ENCODE measurements at regions of chr1 and their contacts with region 1.

Region 1: GRCh38 chr1:119008483-119009311 is 20.6 kb upstream of the TBX15 start:
- DNase-seq: peak; percentile 58
- ATAC-seq: no peak
- H3K4me3 ChIP-seq: peak overlapping the region in 3 of 5 experiments; percentile 1 to 3 (median 1)
- H3K4me3 Mint-ChIP-seq: peak overlapping the region; percentile 85
- H3K27ac ChIP-seq: no peak overlapping the region
- H3K27ac Mint-ChIP-seq: no peak overlapping the region
- H3K4me1 ChIP-seq: peaks cover 18 to 22% of the 10 kb centered on the region in 2 donors
- H3K4me1 Mint-ChIP-seq: peaks cover 17% of the 10 kb centered on the region
- H3K27me3 ChIP-seq: peaks cover 3 to 59% (median 52%) of the 10 kb centered on the region in 4 experiments
- H3K27me3 Mint-ChIP-seq: peaks cover 66% of the 10 kb centered on the region
- CTCF ChIP-seq: peak; percentile 69

Region 2: DNA sequence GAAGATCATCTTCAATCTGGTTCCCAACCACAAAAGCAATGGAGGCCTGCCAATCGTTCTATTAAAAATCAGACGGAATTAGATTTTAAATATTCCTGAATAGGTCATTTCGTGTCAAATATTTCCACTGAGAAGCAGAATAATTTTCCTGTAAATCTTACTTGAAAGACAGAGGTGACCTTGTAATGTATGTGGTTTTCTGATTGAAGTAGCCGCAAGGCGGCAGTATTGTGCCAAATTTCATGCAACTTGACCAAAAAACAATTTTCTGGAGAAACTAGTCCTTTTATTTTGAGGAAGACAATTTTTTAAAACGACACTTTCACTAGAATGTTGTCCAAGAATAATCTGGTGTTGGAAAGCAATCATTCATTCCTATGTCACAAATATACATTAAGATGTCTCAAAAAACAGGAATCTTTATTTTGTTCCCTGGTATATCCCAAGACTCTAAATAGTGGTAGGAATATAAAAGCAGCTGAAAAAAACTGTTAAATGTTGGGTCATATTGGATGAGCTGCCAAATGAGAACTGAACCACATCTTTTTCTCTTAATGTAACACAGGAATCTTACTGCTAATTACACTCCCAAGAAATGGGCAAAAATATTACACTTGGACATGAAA is 857.3 kb before region 1 on chr1:
- CTCF ChIA-PET with region 1: interaction called, 15 read pairs
- POLR2A ChIA-PET with region 1: no interaction called
- intact Hi-C with region 1: no loop called
- DNase-seq: peak; percentile 43
- ATAC-seq: no peak
- H3K4me3 ChIP-seq: no peak overlapping the region
- H3K4me3 Mint-ChIP-seq: no peak overlapping the region
- H3K27ac ChIP-seq: no peak overlapping the region
- H3K27ac Mint-ChIP-seq: no peak overlapping the region
- H3K4me1 ChIP-seq: no peaks in the 10 kb centered on the region
- H3K4me1 Mint-ChIP-seq: no peaks in the 10 kb centered on the region
- H3K27me3 ChIP-seq: no peaks in the 10 kb centered on the region
- H3K27me3 Mint-ChIP-seq: no peaks in the 10 kb centered on the region
- CTCF ChIP-seq: peak; percentile 77

Region 3: GRCh38 chr1:118984086-118984721 is 24.5 kb before region 1 on chr1:
- CTCF ChIA-PET with region 1: interaction called, 3 read pairs
- POLR2A ChIA-PET with region 1: no interaction called
- intact Hi-C with region 1: loop called (anchors 2 kb)
- DNase-seq: peak; percentile 42
- ATAC-seq: no peak
- H3K4me3 ChIP-seq: no peak overlapping the region
- H3K4me3 Mint-ChIP-seq: peak overlapping the region; percentile 62
- H3K27ac ChIP-seq: no peak overlapping the region
- H3K27ac Mint-ChIP-seq: no peak overlapping the region
- H3K4me1 ChIP-seq: peaks cover 52 to 68% of the 10 kb centered on the region in 2 donors
- H3K4me1 Mint-ChIP-seq: peaks cover 43% of the 10 kb centered on the region
- H3K27me3 ChIP-seq: peaks cover 1 to 96% (median 87%) of the 10 kb centered on the region in 4 experiments
- H3K27me3 Mint-ChIP-seq: peaks cover 79% of the 10 kb centered on the region
- CTCF ChIP-seq: no peak

Region 4: DNA sequence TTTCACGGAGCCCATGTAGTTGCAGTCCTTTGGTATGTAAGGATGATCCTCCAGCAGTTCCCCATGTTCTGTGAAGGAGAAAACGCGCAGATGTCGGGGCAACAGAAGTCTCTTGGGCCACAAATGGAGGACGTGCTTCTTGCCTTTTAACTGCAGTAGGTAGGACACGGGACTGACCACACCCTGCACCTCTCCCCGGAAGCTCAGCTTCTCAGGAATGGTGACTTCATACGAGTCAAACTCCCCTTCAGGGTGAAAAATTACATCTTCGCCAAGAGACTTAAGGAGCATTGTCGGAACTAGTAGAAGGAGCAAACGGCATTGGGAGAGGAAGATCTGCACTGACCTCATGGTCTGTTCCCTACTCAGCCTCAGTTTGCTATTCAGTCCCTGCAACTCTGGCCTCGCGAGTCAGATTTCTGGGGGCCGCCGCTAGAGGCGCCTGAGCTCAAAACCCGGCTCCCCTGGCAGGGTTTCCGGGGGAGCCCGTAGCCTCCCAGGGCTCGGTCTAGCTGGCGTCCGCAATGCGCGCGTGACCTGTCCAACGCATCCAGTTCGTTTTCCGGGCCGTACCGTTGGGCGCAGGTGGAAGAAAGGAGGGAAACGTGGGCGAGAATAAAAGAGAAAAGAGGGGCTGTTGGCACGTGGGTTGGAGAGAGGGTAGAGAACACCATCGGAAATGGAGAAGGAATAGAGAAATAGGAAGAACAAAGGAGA is 887.4 kb after region 1 on chr1 and contains the start of gene ADAM30:
- CTCF ChIA-PET with region 1: no interaction called
- POLR2A ChIA-PET with region 1: no interaction called
- intact Hi-C with region 1: no loop called
- DNase-seq: no peak
- ATAC-seq: no peak
- H3K4me3 ChIP-seq: no peak within 1 kb of the TSS
- H3K4me3 Mint-ChIP-seq: no peak within 1 kb of the TSS
- H3K27ac ChIP-seq: no peak within 1 kb of the TSS
- H3K27ac Mint-ChIP-seq: no peak within 1 kb of the TSS
- H3K4me1 ChIP-seq: no peaks in the 10 kb centered on the region
- H3K4me1 Mint-ChIP-seq: no peaks in the 10 kb centered on the region
- H3K27me3 ChIP-seq: peaks cover 0 to 11% (median 1%) of the 10 kb centered on the region in 4 experiments
- H3K27me3 Mint-ChIP-seq: peaks cover 20% of the 10 kb centered on the region
- CTCF ChIP-seq: no peak
- total RNA-seq, gene ADAM30: not detected in 2 replicates